Activated CD8-positive, alpha-beta memory T cell treated with anti-CD3 and anti-CD28 coated beads, Interleukin-2, amount 10 ng/mL, durations not matched to agents 7 days and 5 days (primary cell): ENCODE measurements at regions of chr6 and their contacts with region 1.

Region 1: GRCh38 chr6:118697554-118697953 is 46.2 kb upstream of the CEP85L start:
- DNase-seq: no peak
- ATAC-seq: no peak
- H3K4me3 Mint-ChIP-seq: no peak overlapping the region
- H3K27ac Mint-ChIP-seq: no peak overlapping the region
- H3K4me1 Mint-ChIP-seq: peaks cover 21% of the 10 kb centered on the region
- H3K27me3 Mint-ChIP-seq: no peaks in the 10 kb centered on the region

Region 2: DNA sequence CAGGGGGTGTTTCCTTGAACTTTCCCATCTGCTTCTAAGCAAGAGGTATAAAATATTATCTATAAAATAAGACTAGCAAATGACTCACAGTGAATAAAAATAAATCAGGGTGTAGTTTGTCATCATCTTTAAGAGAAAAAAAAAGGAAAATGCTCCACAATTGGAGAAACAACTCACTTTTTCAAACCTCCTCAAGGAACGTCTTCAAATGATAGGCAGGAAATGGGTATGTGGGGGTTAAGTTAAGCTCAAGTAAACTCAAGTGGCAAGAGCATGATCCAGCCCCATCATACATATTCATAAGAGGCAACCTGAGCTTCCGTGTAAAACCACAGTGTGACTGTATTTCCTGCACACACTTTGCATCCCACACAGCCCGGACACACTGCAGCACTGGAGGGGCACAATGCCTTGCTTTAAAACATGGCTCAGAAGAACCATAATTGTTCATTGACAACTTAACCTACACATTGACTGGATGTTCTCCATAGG is 12.4 kb after region 1 on chr6:
- CTCF ChIA-PET with region 1: interaction called, 10 read pairs
- DNase-seq: peak; percentile 91
- ATAC-seq: peak; percentile 88
- H3K4me3 Mint-ChIP-seq: peak overlapping the region; percentile 96
- H3K27ac Mint-ChIP-seq: peak overlapping the region; percentile 96
- H3K4me1 Mint-ChIP-seq: peaks cover 61% of the 10 kb centered on the region
- H3K27me3 Mint-ChIP-seq: no peaks in the 10 kb centered on the region